Common myeloid progenitor, CD34-positive (primary cell): ENCODE measurements at regions of chr1 and their contacts with region 1.

Region 1: GRCh38 chr1:108852221-108852975 is 4.5 kb downstream of the AKNAD1 start:
- DNase-seq: peak; percentile 38 to 89 (median 85)
- H3K4me3 ChIP-seq: peak overlapping the region in 5 of 7 experiments; percentile 8 to 63 (median 37)
- H3K27ac ChIP-seq: peak overlapping the region; percentile 93
- H3K4me1 ChIP-seq: peaks cover 24 to 79% (median 58%) of the 10 kb centered on the region in 4 experiments
- H3K27me3 ChIP-seq: no peaks in the 10 kb centered on the region

Region 2: GRCh38 chr1:108897865-108898720 is 45.7 kb after region 1 on chr1:
- CTCF ChIA-PET with region 1: interaction called, 14 read pairs
- POLR2A ChIA-PET with region 1: interaction called, 3 read pairs
- DNase-seq: peak; percentile 77 to 88 (median 86)
- H3K4me3 ChIP-seq: no peak overlapping the region
- H3K27ac ChIP-seq: no peak overlapping the region
- H3K4me1 ChIP-seq: peaks cover 0 to 22% (median 3%) of the 10 kb centered on the region in 4 experiments
- H3K27me3 ChIP-seq: no peaks in the 10 kb centered on the region

Region 3: GRCh38 chr1:109020693-109021257 is 168.4 kb after region 1 on chr1:
- CTCF ChIA-PET with region 1: no interaction called
- POLR2A ChIA-PET with region 1: no interaction called
- DNase-seq: no peak
- H3K4me3 ChIP-seq: no peak overlapping the region
- H3K27ac ChIP-seq: no peak overlapping the region
- H3K4me1 ChIP-seq: peaks cover 0 to 2% (median under 1%) of the 10 kb centered on the region in 4 experiments
- H3K27me3 ChIP-seq: no peaks in the 10 kb centered on the region